WTC11 (cell line): ENCODE measurements at regions of chr18 and their contacts with region 1.

Region 1: GRCh38 chr18:63936156-63936931 is 12.8 kb upstream of the HMSD start:
- DNase-seq: peak; percentile 88
- ATAC-seq: peak; percentile 97
- H3K4me3 Mint-ChIP-seq: no peak overlapping the region
- H3K27ac Mint-ChIP-seq: no peak overlapping the region
- H3K4me1 Mint-ChIP-seq: peaks cover 5% of the 10 kb centered on the region; the same call in 1 of the 2 replicates
- H3K27me3 Mint-ChIP-seq: peaks cover 9% of the 10 kb centered on the region
- CTCF ChIP-seq: peak; percentile 32; the same call in 1 of the 2 replicates

Region 2: GRCh38 chr18:63648241-63648640 is 288.1 kb before region 1 on chr18:
- CTCF ChIA-PET with region 1: no interaction called
- POLR2A ChIA-PET with region 1: no interaction called
- DNase-seq: no peak
- ATAC-seq: no peak
- H3K4me3 Mint-ChIP-seq: no peak overlapping the region
- H3K27ac Mint-ChIP-seq: no peak overlapping the region
- H3K4me1 Mint-ChIP-seq: peaks cover 39% of the 10 kb centered on the region
- H3K27me3 Mint-ChIP-seq: no peaks in the 10 kb centered on the region
- CTCF ChIP-seq: no peak

Region 3: GRCh38 chr18:63949068-63949737 is 12.9 kb after region 1 on chr18 and contains the start of gene HMSD:
- CTCF ChIA-PET with region 1: interaction called, 11 read pairs
- POLR2A ChIA-PET with region 1: interaction called, 3 read pairs
- DNase-seq: peak; percentile 84
- ATAC-seq: peak; percentile 99
- H3K4me3 Mint-ChIP-seq: peak within 1 kb of the TSS; percentile 82
- H3K27ac Mint-ChIP-seq: peak within 1 kb of the TSS; percentile 87
- H3K4me1 Mint-ChIP-seq: peaks cover 19% of the 10 kb centered on the region
- H3K27me3 Mint-ChIP-seq: peaks cover 21% of the 10 kb centered on the region
- CTCF ChIP-seq: no peak
- total RNA-seq, gene HMSD: 3.0 to 8.1 TPM (median 6.1 TPM) in 3 replicates

Region 4: GRCh38 chr18:63963615-63964256 is 27.4 kb after region 1 on chr18:
- CTCF ChIA-PET with region 1: interaction called, 10 read pairs
- POLR2A ChIA-PET with region 1: no interaction called
- DNase-seq: peak; percentile 46
- ATAC-seq: peak; percentile 88
- H3K4me3 Mint-ChIP-seq: no peak overlapping the region
- H3K27ac Mint-ChIP-seq: no peak overlapping the region
- H3K4me1 Mint-ChIP-seq: no peaks in the 10 kb centered on the region; the same call in 1 of the 2 replicates
- H3K27me3 Mint-ChIP-seq: peaks cover 10% of the 10 kb centered on the region
- CTCF ChIP-seq: peak; percentile 33; the same call in 1 of the 2 replicates